Transverse colon (tissue), 4 donors: ENCODE measurements at regions of chr15 and their contacts with region 1.

Region 1: GRCh38 chr15:45198337-45199135 is 10.8 kb upstream of the SHF start:
- DNase-seq: peak; percentile 97
- H3K4me3 ChIP-seq: peak overlapping the region; percentile 17 to 55 (median 54)
- H3K27ac ChIP-seq: peak overlapping the region; percentile 96 to 99 (median 98)
- H3K4me1 ChIP-seq: peaks cover 0 to 9% (median 0%) of the 10 kb centered on the region in 4 donors
- H3K27me3 ChIP-seq: no peaks in the 10 kb centered on the region
- CTCF ChIP-seq: peak; percentile 51 to 86 (median 70)
- EP300 ChIP-seq: no peak
- POLR2A ChIP-seq: peak; percentile 96

Region 2: DNA sequence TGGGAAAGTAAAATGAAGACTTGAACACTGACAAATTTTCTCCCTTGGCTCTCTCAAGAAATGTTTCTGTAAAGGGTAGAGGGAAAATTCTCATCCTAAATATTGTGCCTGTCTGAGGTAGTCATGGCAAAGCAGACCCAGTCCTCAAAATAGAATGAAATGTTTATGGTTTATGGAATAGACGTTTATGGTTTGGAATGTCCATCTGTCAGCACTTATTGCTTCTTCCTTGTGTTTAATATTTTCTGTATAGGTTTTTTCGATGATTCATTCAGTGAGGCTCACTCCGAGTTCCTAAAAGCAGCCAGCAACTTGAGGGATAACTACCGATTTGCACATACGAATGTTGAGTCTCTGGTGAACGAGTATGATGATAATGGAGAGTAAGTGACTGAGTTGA is 1435.7 kb before region 1 on chr15:
- in situ Hi-C with region 1: no loop called
- intact Hi-C with region 1: no loop called
- DNase-seq: no peak
- H3K4me3 ChIP-seq: no peak overlapping the region
- H3K27ac ChIP-seq: no peak overlapping the region
- H3K4me1 ChIP-seq: no peaks in the 10 kb centered on the region
- H3K27me3 ChIP-seq: no peaks in the 10 kb centered on the region
- CTCF ChIP-seq: no peak
- EP300 ChIP-seq: no peak
- POLR2A ChIP-seq: no peak

Region 3: GRCh38 chr15:45009046-45009445 is 189.5 kb before region 1 on chr15:
- in situ Hi-C with region 1: no loop called
- intact Hi-C with region 1: no loop called
- DNase-seq: no peak
- H3K4me3 ChIP-seq: no peak overlapping the region
- H3K27ac ChIP-seq: no peak overlapping the region
- H3K4me1 ChIP-seq: no peaks in the 10 kb centered on the region
- H3K27me3 ChIP-seq: peaks cover 4% of the 10 kb centered on the region
- CTCF ChIP-seq: no peak
- EP300 ChIP-seq: no peak
- POLR2A ChIP-seq: no peak

Region 4: GRCh38 chr15:45156744-45157455 is 41.6 kb before region 1 on chr15:
- in situ Hi-C with region 1: no loop called
- intact Hi-C with region 1: no loop called
- DNase-seq: no peak
- H3K4me3 ChIP-seq: no peak overlapping the region
- H3K27ac ChIP-seq: no peak overlapping the region
- H3K4me1 ChIP-seq: no peaks in the 10 kb centered on the region
- H3K27me3 ChIP-seq: no peaks in the 10 kb centered on the region
- CTCF ChIP-seq: no peak
- EP300 ChIP-seq: no peak
- POLR2A ChIP-seq: no peak

Region 5: GRCh38 chr15:45287390-45287956 is 88.9 kb after region 1 on chr15:
- in situ Hi-C with region 1: no loop called
- intact Hi-C with region 1: loop called (anchors 10 kb)
- DNase-seq: no peak
- H3K4me3 ChIP-seq: no peak overlapping the region
- H3K27ac ChIP-seq: no peak overlapping the region
- H3K4me1 ChIP-seq: no peaks in the 10 kb centered on the region
- H3K27me3 ChIP-seq: no peaks in the 10 kb centered on the region
- CTCF ChIP-seq: no peak
- EP300 ChIP-seq: no peak
- POLR2A ChIP-seq: no peak

Region 6: GRCh38 chr15:45378149-45378912 is 179.8 kb after region 1 on chr15 and contains the start of gene GATM:
- in situ Hi-C with region 1: loop called in 2 of 4 experiments (anchors 25 kb)
- intact Hi-C with region 1: no loop called
- DNase-seq: peak; percentile 79
- H3K4me3 ChIP-seq: peak within 1 kb of the TSS; percentile 51 to 73 (median 60)
- H3K27ac ChIP-seq: peak within 1 kb of the TSS; percentile 83 to 92 (median 84)
- H3K4me1 ChIP-seq: peaks cover 0 to 28% (median 13%) of the 10 kb centered on the region in 4 donors
- H3K27me3 ChIP-seq: no peaks in the 10 kb centered on the region
- CTCF ChIP-seq: peak; percentile 33 to 66 (median 52)
- EP300 ChIP-seq: no peak
- POLR2A ChIP-seq: peak; percentile 43
- total RNA-seq, gene GATM: 15.9 to 96.9 (median 18.6) TPM

Region 7: GRCh38 chr15:45611305-45611704 is 412.8 kb after region 1 on chr15:
- in situ Hi-C with region 1: loop called in 1 of 4 experiments (anchors 25 kb)
- intact Hi-C with region 1: no loop called
- DNase-seq: no peak
- H3K4me3 ChIP-seq: no peak overlapping the region
- H3K27ac ChIP-seq: no peak overlapping the region
- H3K4me1 ChIP-seq: no peaks in the 10 kb centered on the region
- H3K27me3 ChIP-seq: no peaks in the 10 kb centered on the region
- CTCF ChIP-seq: peak in 4 of 5 experiments; percentile 27 to 38 (median 33)
- EP300 ChIP-seq: no peak
- POLR2A ChIP-seq: no peak